Panc1 (cell line): ENCODE measurements at regions of chr13 and their contacts with region 1.

Region 1: DNA sequence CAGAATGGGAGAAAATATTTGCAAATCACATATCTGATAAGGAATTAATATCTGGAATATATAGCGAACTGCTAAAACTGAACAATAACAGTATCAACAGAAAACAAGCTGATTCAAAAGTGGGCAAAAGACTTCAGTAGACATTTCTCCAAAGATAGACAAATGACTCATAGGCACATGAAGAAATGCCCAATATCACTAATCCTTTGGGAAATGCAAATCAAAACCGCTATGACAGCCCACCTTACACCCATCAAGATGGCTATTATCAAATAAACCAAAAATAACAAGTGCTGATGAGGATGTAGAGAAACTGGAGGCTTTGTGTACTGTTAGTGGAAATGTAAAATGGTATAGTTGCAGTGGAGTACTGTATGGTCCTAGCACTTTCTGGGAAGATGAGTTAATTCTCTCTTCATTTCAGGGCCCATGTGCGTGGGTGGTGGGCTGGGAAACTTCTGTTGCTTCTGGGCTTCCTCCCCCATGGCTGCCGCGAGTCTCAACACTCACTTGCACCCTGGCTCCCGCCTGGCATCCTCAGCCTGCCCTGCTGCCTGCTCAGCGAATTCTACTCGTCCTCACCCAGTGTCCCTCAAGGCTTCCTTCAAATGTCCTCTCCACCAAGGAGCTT is 12.4 kb upstream of the GJA3 start:
- DNase-seq: no peak
- ATAC-seq: no peak
- H3K4me3 ChIP-seq: no peak overlapping the region
- H3K27ac ChIP-seq: no peak overlapping the region
- H3K4me1 ChIP-seq: 0 out of 2 replicates have a peak, but pooled peaks cover 5% of the 10 kb centered on the region
- H3K27me3 ChIP-seq: no peaks in the 10 kb centered on the region
- CTCF ChIP-seq: no peak

Region 2: DNA sequence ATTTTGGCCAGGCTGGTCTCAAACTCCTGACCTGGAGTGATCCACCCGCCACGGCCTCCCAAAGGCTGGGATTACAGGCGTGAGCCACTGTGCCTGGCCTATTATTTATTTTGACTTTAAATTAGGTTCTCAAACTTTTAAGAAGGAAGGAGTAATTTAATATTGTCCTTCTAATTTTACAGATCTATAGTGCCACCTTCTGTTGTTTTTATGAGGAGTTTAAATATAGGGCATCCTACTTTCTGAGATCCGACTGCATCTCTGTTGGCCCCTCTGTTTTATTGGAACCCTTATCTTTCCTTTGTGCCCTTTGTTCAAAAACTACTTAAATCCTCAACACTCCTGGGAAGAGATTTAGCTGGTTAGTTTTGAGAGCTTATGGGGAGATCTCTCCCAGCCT is 284.4 kb before region 1 on chr13:
- CTCF ChIA-PET with region 1: no interaction called
- POLR2A ChIA-PET with region 1: no interaction called
- in situ Hi-C with region 1: no loop called
- intact Hi-C with region 1: no loop called
- DNase-seq: no peak
- ATAC-seq: no peak
- H3K4me3 ChIP-seq: no peak overlapping the region
- H3K27ac ChIP-seq: no peak overlapping the region
- H3K4me1 ChIP-seq: no peaks in the 10 kb centered on the region
- H3K27me3 ChIP-seq: no peaks in the 10 kb centered on the region
- CTCF ChIP-seq: no peak

Region 3: GRCh38 chr13:20305587-20305986 is 132.4 kb after region 1 on chr13:
- CTCF ChIA-PET with region 1: no interaction called
- POLR2A ChIA-PET with region 1: no interaction called
- in situ Hi-C with region 1: no loop called
- intact Hi-C with region 1: no loop called
- DNase-seq: no peak
- ATAC-seq: no peak
- H3K4me3 ChIP-seq: no peak overlapping the region
- H3K27ac ChIP-seq: no peak overlapping the region
- H3K4me1 ChIP-seq: no peaks in the 10 kb centered on the region
- H3K27me3 ChIP-seq: no peaks in the 10 kb centered on the region
- CTCF ChIP-seq: no peak; the same call in 1 of the 2 replicates

Region 4: GRCh38 chr13:20891768-20892167 is 718.5 kb after region 1 on chr13:
- CTCF ChIA-PET with region 1: interaction called, 12 read pairs
- POLR2A ChIA-PET with region 1: no interaction called
- in situ Hi-C with region 1: no loop called
- intact Hi-C with region 1: no loop called
- DNase-seq: no peak
- ATAC-seq: no peak
- H3K4me3 ChIP-seq: no peak overlapping the region
- H3K27ac ChIP-seq: no peak overlapping the region
- H3K4me1 ChIP-seq: no peaks in the 10 kb centered on the region
- H3K27me3 ChIP-seq: no peaks in the 10 kb centered on the region
- CTCF ChIP-seq: no peak